ENCODE measurements at regions of chr9 and their contacts with region 1.

Region 1: DNA sequence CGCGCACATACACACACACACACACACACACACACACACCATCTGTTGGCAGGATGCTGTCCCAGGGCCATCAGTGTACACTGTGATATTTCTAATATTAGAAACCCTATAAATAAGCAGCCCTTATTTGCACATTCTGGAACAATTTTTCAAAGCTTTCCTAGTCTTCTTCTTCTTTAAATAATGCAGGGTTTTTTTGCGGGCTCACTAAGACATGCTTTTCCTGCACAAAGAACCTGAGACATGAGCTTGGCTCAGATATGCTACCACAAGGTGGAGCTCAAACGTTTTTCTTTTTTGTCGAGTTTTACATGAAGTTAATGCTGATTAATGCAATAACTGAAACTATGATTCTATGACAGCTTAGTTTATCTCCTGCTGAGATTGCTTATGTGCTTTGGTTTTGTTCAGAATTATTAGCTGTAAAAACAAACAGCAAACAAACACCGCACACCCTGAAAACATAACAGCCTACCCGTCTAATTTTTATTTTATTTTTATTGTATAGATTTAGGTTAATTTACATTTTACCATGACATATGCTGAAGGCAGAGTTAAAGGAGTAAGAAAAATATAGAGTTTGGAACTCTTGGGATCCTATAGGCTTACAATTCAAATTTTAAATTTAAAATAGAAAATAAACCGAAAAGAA is 95.8 kb downstream of the ALDH1A1 start:
- DNase-seq: peak in 1 of 3 donors; percentile 66
- ATAC-seq: peak; percentile 60
- H3K4me3 ChIP-seq: no peak overlapping the region
- H3K4me1 ChIP-seq: no peaks in the 10 kb centered on the region
- CTCF ChIP-seq: peak; percentile 20

Region 2: GRCh38 chr9:71655151-71655550 is 1201.9 kb before region 1 on chr9:
- intact Hi-C with region 1: no loop called
- DNase-seq: no peak
- ATAC-seq: no peak
- H3K4me3 ChIP-seq: no peak overlapping the region
- H3K4me1 ChIP-seq: no peaks in the 10 kb centered on the region
- CTCF ChIP-seq: no peak

Region 3: GRCh38 chr9:72794947-72795346 is 62.2 kb before region 1 on chr9:
- intact Hi-C with region 1: no loop called
- DNase-seq: no peak
- ATAC-seq: no peak
- H3K4me3 ChIP-seq: no peak overlapping the region
- H3K4me1 ChIP-seq: no peaks in the 10 kb centered on the region
- CTCF ChIP-seq: no peak

Region 4: DNA sequence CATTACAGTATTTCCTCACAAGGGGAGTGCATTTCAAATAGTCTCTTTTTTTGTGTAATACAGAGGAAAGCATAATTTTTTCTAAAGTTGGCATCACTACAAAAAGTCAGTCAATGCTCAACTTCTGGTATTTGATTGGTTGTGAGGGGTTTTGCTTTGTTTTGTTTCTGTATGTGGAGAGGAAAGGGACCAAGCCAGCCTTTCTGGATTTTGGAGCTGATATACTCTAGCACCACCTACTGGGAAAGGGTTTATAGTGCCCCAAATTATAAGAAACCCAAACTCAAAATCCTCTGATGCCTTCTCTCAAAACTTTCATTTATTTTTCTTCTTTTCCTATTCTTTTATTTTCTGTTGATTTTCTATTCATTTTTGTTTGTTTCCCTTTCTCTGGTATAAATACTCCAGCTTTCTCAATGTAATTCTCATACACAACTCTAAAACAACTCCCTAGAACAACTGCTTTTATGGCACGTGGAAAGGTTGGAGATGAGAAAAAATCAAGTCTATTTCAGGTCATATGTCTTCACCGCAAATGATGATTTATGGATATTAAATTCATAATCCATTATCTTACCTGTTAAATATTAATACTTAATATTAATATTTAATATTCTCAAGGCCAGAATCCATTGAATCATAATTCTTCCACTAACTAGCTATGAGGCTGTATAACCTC is 225.0 kb after region 1 on chr9:
- intact Hi-C with region 1: loop called (anchors 10 kb)
- DNase-seq: peak in 1 of 3 donors; percentile 47
- ATAC-seq: peak; percentile 55
- H3K4me3 ChIP-seq: no peak overlapping the region
- H3K4me1 ChIP-seq: peaks cover 12% of the 10 kb centered on the region
- CTCF ChIP-seq: peak; percentile 41

Region 5: GRCh38 chr9:73183917-73184861 is 327.1 kb after region 1 on chr9:
- intact Hi-C with region 1: loop called in 1 of 2 experiments (anchors 10 kb)
- DNase-seq: no peak
- ATAC-seq: no peak
- H3K4me3 ChIP-seq: no peak overlapping the region
- H3K4me1 ChIP-seq: no peaks in the 10 kb centered on the region
- CTCF ChIP-seq: no peak

Region 6: DNA sequence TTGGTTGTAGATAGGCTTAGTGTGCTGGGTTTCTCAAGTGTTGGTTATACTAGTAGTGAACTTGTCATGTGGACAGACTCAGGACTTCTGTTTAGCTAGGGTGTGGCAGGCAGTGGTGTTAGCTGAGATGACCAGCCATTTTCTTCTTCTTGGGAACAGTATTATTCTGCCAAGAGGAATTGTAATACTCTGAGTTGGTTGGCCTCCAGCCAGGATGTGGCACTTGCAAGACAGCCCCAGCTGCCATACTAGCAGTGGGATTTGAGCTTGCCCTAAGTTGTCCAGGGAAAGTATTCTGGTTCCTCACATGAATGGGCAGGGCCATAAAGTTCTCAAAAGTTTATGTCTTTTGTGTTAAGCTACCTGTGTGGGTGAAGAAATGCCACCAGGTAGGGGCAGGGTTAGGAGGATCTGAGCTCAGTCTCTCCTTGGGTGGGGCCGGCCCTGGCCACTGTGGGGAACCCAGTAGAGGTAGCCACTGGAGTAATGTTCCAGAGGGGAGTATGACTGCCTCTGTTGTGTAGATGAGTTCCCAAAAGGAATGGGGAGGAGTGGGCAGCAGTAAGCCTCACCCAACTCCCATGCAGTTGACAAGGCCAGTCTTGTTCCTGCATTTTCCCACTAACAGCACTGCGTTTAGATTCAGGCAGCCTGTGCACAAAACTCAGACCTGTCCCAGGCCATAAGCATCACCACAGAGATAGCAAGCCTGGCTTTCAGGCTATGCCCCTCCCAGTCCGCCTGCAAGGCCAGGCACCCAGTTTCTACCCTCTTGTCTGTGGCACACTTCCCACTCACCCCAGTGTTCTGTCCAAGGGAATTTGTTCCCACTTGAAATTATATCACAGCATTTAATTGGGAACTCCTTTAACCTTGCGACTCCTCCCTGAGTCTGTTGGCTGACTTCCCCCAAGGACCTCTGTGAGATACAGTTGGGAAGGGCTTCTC is 545.3 kb after region 1 on chr9:
- intact Hi-C with region 1: no loop called
- DNase-seq: no peak
- ATAC-seq: no peak
- H3K4me3 ChIP-seq: no peak overlapping the region
- H3K4me1 ChIP-seq: no peaks in the 10 kb centered on the region
- CTCF ChIP-seq: no peak